ENCODE measurements at regions of chr3 and their contacts with region 1.

Region 1: DNA sequence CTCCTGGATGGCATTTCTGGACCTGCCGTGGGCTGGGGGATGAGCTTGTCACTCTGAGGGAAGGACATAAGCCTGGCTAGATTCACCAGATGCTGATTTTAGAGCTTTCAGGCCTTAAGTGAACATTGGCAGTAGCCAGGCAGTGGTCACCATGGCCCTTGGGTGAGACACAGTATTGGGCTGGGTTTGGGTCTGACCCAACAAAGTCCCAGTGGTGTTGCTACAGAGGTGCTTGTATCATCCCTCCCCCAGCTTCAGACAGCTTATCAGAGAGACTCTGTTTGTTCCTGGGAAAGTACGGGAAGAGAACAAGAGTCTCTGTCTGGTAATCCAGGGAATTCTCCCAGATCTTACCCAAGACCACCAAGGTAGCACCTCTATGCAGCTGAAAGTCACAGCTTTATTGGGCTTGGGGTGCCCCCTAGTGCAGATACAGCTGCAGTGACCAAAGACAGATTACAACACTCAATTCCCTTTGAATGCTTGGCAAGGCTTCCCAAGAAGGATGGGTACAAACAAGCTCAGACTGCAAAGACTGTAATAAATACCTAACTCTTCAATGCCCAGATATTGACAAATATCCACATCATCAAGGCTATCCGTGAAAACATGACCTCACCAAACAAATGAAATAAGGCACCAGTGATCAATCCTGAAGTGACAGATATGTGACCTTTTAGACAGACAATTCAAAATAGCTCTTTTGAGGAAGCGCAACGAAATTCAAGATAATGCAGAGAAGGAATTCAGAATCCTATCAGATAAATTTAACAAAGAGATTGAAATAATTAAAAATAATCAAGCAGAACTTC is 9.9 kb upstream of the RUVBL1 start:
- DNase-seq: peak; percentile 52
- ATAC-seq: peak; percentile 92
- H3K4me3 ChIP-seq: no peak overlapping the region
- H3K27ac ChIP-seq: no peak overlapping the region
- H3K4me1 ChIP-seq: no peaks in the 10 kb centered on the region; the same call in 1 of the 2 replicates
- H3K27me3 ChIP-seq: no peaks in the 10 kb centered on the region
- CTCF ChIP-seq: peak; percentile 86

Region 2: DNA sequence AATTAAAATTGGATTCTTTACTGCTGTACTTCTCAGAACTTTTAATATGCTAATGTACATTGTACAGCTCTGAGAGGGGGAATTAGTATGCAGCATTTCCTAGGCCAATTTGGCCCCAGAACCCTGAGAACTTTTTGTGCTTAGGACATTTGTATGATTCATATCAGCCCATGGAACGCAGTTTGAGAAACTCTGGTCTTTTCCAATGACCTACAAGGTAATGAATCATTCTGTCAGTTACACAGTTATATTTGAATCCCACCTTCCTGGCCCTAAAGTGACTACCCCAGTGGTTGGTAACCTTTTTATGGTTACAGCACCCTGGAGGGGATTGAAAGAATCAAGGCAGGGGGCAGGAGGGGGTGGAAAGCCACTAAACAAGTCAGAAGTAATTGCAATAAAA is 244.0 kb before region 1 on chr3:
- CTCF ChIA-PET with region 1: no interaction called
- POLR2A ChIA-PET with region 1: no interaction called
- in situ Hi-C with region 1: no loop called
- intact Hi-C with region 1: no loop called
- DNase-seq: no peak
- ATAC-seq: no peak
- H3K4me3 ChIP-seq: no peak overlapping the region
- H3K27ac ChIP-seq: no peak overlapping the region
- H3K4me1 ChIP-seq: no peaks in the 10 kb centered on the region
- H3K27me3 ChIP-seq: 0 out of 2 replicates have a peak, but pooled peaks cover 5% of the 10 kb centered on the region
- CTCF ChIP-seq: no peak

Region 3: DNA sequence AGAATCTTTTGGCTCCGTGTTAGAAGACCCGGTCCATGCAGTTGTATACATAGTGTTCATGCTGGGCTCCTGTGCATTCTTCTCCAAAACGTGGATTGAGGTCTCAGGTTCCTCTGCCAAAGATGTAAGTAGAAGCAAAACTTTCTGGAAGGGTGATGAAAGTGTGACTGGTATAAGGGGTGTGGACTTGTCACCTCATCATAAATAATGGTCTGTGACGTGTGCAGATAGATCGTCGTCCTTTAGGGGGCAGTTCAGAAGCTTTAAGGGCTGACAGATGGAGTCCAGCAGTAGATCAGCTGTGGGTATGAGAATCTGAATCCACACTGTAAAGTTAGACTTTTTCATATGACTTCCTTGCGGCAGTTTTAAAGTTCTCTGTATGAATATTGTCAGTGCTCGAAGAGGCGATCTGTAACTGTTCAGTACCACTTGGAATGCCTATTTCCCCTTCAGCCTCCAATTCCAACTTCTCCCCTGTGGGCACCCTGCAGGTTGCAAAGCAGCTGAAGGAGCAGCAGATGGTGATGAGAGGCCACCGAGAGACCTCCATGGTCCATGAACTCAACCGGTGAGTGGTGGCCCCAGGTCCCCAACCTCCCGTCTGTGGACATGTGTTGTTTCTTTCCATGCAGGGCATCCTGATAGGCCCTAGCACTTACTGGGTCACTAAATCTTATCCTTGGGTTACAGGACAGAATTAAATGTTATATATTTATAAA is 65.8 kb before region 1 on chr3:
- CTCF ChIA-PET with region 1: no interaction called
- POLR2A ChIA-PET with region 1: no interaction called
- in situ Hi-C with region 1: no loop called
- intact Hi-C with region 1: loop called (anchors 2 kb)
- DNase-seq: no peak
- ATAC-seq: peak; percentile 10; the same call in 1 of the 2 replicates
- H3K4me3 ChIP-seq: no peak overlapping the region
- H3K27ac ChIP-seq: no peak overlapping the region
- H3K4me1 ChIP-seq: no peaks in the 10 kb centered on the region; the same call in 1 of the 2 replicates
- H3K27me3 ChIP-seq: no peaks in the 10 kb centered on the region
- CTCF ChIP-seq: no peak

Region 4: GRCh38 chr3:129160891-129161859 is 1027.7 kb after region 1 on chr3 and contains the start of gene ISY1:
- CTCF ChIA-PET with region 1: no interaction called
- POLR2A ChIA-PET with region 1: no interaction called
- in situ Hi-C with region 1: no loop called
- intact Hi-C with region 1: no loop called
- DNase-seq: peak; percentile 97
- ATAC-seq: peak; percentile 92
- H3K4me3 ChIP-seq: peak within 1 kb of the TSS; percentile 95 to 98
- H3K27ac ChIP-seq: peak within 1 kb of the TSS; percentile 100
- H3K4me1 ChIP-seq: peaks cover 23% of the 10 kb centered on the region
- H3K27me3 ChIP-seq: no peaks in the 10 kb centered on the region
- CTCF ChIP-seq: peak; percentile 96
- total RNA-seq, gene ISY1: 45.7 TPM

Measured in Panc1 (cell line).